HepG2 (cell line): ENCODE measurements at regions of chr7 and their contacts with region 1.

Region 1: DNA sequence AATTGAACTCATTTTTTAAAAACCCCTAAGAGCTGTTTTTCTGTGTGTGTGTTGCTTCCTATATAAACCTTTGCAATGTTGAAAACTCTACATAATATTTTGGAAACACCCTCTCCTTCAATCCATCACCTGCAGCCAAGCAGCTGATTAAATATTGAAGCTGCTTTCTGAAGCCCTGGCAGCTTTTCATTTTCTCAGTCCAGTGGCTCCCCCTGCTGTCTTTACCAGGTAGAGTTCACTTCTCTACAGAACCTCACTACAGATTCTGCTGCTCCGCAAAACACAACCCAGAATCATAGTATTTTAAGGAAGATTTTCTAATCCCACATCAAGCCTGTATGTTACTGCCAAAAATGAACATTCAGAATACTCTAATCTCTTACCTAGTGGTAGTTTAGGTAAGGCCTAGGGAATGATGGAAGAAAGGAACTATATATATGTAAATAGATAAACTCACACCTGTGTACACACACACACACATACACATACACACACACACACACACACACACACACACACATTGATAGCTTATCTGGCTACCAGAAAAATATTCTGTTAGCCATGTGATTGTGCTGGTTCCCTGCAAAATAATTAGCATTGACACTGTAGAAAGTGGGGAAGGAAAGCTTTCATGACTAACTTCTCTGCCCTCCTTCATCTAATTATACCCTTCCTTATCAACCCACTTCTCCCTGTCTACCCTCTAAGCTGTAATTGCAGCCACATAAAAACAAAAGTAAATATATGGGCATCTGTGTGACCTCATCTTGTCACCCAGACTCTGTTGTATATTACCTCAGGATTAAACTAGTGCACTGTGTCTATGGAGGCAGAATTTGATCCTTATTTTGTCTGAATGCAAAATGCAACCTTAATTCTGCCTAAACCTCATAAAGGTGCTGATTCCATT is 229.5 kb upstream of the FZD1 start:
- DNase-seq: peak; percentile 8
- ATAC-seq: peak; percentile 51; the same call in 2 of the 3 replicates
- H3K4me3 ChIP-seq: no peak overlapping the region
- H3K27ac ChIP-seq: no peak overlapping the region
- H3K4me1 ChIP-seq: no peaks in the 10 kb centered on the region
- H3K27me3 ChIP-seq: no peaks in the 10 kb centered on the region
- CTCF ChIP-seq: peak; percentile 63
- EP300 ChIP-seq: no peak
- POLR2A ChIP-seq: no peak
- RAD21 ChIP-seq: no peak

Region 2: GRCh38 chr7:90552521-90552920 is 482.2 kb before region 1 on chr7:
- CTCF ChIA-PET with region 1: no interaction called
- POLR2A ChIA-PET with region 1: no interaction called
- in situ Hi-C with region 1: no loop called
- intact Hi-C with region 1: loop called (anchors 2 kb)
- DNase-seq: no peak
- ATAC-seq: no peak
- H3K4me3 ChIP-seq: no peak overlapping the region
- H3K27ac ChIP-seq: no peak overlapping the region
- H3K4me1 ChIP-seq: peaks cover 6% of the 10 kb centered on the region; the same call in 1 of the 2 replicates
- H3K27me3 ChIP-seq: no peaks in the 10 kb centered on the region
- CTCF ChIP-seq: no peak
- EP300 ChIP-seq: no peak
- POLR2A ChIP-seq: no peak
- RAD21 ChIP-seq: no peak

Region 3: DNA sequence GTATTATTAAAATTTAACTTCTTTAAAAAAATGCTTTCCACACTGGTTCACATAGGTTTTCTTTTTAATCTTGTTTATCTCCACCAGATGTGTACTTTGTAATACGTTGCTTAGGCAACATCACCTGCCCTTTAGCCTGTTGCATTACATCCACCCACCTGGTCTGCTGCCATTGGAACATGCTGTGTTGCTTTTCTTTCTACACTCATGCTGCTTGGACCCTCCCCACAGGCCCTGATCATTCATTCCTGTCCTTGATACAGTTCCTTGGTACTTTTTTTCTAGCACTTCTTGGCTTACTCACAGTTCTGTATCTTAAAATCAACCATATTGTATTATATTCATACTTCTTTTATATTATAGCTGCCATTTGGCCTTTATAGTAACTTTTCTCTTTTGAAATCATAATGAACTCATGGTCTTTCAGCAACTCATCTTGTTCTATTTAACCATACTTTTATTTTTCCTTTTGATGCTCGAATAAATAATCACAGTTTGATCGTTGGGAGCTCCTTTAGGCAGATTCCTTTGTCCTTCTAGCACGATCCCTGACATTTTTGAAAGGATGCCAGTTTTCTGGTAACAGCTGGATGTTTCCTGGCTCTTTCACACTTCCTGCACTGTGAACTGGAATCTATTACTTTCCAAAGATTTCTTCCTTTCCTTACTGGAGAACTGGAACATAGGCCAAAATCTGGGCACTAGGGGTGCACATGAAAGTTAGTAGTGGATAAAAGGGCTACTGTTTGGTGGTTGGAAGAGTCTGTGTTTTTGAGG is 313.5 kb before region 1 on chr7:
- CTCF ChIA-PET with region 1: no interaction called
- POLR2A ChIA-PET with region 1: no interaction called
- in situ Hi-C with region 1: no loop called
- intact Hi-C with region 1: no loop called
- DNase-seq: peak; percentile 53
- ATAC-seq: peak; percentile 96
- H3K4me3 ChIP-seq: no peak overlapping the region
- H3K27ac ChIP-seq: peak overlapping the region; percentile 38
- H3K4me1 ChIP-seq: peaks cover 50% of the 10 kb centered on the region
- H3K27me3 ChIP-seq: 0 out of 5 replicates have a peak, but pooled peaks cover 0 to 3% of the 10 kb centered on the region in 2 experiments
- CTCF ChIP-seq: no peak
- EP300 ChIP-seq: peak in 1 of 2 experiments; percentile 73; a peak in 2 of 4 replicates
- POLR2A ChIP-seq: no peak
- RAD21 ChIP-seq: no peak

Region 4: GRCh38 chr7:91112902-91113341 is 78.2 kb after region 1 on chr7:
- CTCF ChIA-PET with region 1: no interaction called
- POLR2A ChIA-PET with region 1: no interaction called
- in situ Hi-C with region 1: no loop called
- intact Hi-C with region 1: no loop called
- DNase-seq: no peak
- ATAC-seq: no peak
- H3K4me3 ChIP-seq: no peak overlapping the region
- H3K27ac ChIP-seq: no peak overlapping the region
- H3K4me1 ChIP-seq: no peaks in the 10 kb centered on the region
- H3K27me3 ChIP-seq: no peaks in the 10 kb centered on the region
- CTCF ChIP-seq: no peak
- EP300 ChIP-seq: no peak
- POLR2A ChIP-seq: no peak
- RAD21 ChIP-seq: no peak